ENCODE measurements at regions of chr1 and their contacts with region 1.

Region 1: DNA sequence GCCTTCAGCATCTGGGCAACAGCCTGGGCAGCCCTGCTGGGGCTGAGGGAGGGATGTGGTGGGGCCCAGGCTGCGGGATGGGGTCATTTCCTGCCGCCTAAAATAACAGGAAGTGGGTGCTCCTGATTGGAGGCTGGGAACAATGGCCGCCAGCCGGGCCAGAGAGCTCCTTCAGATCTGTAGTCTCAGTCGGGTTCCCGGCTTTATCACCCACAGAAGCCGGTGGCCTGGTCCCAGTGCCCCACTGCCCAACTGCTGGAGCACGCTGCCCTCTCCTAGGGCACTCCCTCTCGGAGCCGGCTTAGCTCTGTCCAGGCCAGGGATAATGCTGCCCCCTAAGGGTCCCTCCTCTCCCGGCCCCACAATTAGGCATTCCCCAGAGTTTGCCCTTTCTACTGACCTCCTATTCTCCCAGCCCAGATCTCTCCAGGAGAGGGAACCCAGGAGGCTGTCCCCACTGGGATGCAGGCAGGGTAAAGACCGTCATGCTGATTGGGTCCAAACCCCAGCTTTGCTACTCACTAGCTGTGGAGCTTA is 5.1 kb downstream of the MAP7D1 start:
- DNase-seq: peak; percentile 35
- ATAC-seq: peak; percentile 19
- H3K4me3 ChIP-seq: peak overlapping the region; percentile 14; the same call in 1 of the 2 replicates
- H3K27ac ChIP-seq: peak overlapping the region; percentile 46
- H3K4me1 ChIP-seq: peaks cover 47% of the 10 kb centered on the region
- H3K27me3 ChIP-seq: no peaks in the 10 kb centered on the region
- CTCF ChIP-seq: peak; percentile 58

Region 2: DNA sequence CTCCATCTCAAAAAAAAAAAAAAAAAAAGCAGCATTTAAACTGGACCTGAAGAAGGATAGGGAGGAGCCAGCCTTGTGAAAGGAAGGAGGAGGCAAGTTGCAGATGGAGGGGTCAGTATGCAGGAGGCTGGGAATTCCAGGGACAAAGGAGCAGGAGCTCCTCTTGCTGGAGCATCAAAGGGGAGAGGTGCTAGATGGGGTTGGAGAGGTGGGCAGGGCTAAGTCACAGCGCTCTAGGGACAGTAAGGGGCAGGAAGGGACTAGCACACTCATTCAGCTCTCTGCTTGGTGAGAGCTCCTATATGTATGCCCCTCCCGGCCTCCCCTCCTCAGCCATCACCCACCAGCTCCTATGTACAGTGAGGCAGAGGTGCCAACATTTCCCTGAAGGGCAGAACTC is 21.7 kb after region 1 on chr1:
- CTCF ChIA-PET with region 1: interaction called, 3 read pairs
- POLR2A ChIA-PET with region 1: interaction called, 41 read pairs
- intact Hi-C with region 1: loop called (anchors 1 kb)
- DNase-seq: no peak
- ATAC-seq: no peak
- H3K4me3 ChIP-seq: no peak overlapping the region
- H3K27ac ChIP-seq: no peak overlapping the region
- H3K4me1 ChIP-seq: peaks cover 3% of the 10 kb centered on the region; the same call in 1 of the 2 replicates
- H3K27me3 ChIP-seq: no peaks in the 10 kb centered on the region
- CTCF ChIP-seq: no peak

Measured in PC-3 (cell line).